Activated CD4-positive, alpha-beta memory T cell treated with anti-CD3 and anti-CD28 coated beads for 36 hours (primary cell): ENCODE measurements at regions of chr3 and their contacts with region 1.

Region 1: DNA sequence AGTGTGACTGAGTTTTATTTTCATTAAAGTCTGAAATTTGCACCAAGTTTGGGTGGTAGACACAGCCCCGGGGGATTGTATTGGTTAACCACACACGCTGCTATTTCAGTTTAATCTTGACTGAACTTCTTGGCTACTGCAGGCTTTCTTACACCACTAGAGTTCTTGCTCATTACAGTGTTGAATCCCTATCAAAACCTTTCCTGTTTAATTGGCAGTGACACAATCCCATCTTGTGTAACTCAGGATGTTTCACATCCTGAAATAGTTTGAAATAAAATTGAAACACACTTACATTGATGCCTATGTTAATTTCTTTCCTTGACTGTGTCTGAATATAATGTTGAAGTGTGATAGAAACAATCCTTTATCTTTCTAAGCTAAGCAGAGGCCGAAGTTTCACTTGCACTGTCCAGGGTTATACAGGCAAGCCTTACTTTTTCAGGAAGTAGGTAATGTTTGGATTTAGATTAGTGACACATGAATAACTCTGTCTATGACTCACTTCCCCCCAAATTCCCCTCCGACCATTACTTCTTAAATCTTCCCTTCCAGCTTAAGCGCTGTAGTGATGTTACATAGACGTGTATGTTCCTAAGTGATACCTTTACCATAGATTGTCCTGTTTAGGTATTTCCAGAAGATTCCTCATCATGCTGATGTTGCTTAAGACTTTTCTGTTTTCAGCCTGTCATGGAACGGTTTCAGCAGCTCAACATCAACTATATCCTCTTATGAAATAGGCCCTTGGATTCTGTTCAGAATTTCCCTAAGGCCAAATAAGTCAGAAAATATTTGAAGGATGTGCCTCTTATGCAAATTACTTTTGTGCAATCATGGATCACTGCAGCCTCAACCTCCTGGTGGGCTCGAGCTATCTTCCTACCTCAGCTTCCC is 16.8 kb downstream of the ATG7 start:
- DNase-seq: no peak
- H3K4me3 Mint-ChIP-seq: peak overlapping the region; percentile 18
- H3K27ac Mint-ChIP-seq: peak overlapping the region; percentile 84
- H3K4me1 Mint-ChIP-seq: peaks cover 47% of the 10 kb centered on the region
- H3K27me3 Mint-ChIP-seq: no peaks in the 10 kb centered on the region

Region 2: GRCh38 chr3:11271986-11272904 is 16.8 kb before region 1 on chr3 and contains the start of gene ATG7:
- CTCF ChIA-PET with region 1: interaction called, 5 read pairs
- POLR2A ChIA-PET with region 1: interaction called, 27 read pairs
- intact Hi-C with region 1: loop called (anchors 2 kb)
- DNase-seq: peak; percentile 97
- H3K4me3 Mint-ChIP-seq: peak within 1 kb of the TSS; percentile 85
- H3K27ac Mint-ChIP-seq: peak within 1 kb of the TSS; percentile 85
- H3K4me1 Mint-ChIP-seq: peaks cover 46% of the 10 kb centered on the region
- H3K27me3 Mint-ChIP-seq: no peaks in the 10 kb centered on the region
- total RNA-seq, gene ATG7: 30.5 to 33.6 TPM

Region 3: GRCh38 chr3:11306817-11307589 is 18.0 kb after region 1 on chr3:
- CTCF ChIA-PET with region 1: interaction called, 4 read pairs
- POLR2A ChIA-PET with region 1: interaction called, 4 read pairs
- intact Hi-C with region 1: loop called (anchors 2 kb)
- DNase-seq: peak; percentile 48
- H3K4me3 Mint-ChIP-seq: no peak overlapping the region
- H3K27ac Mint-ChIP-seq: no peak overlapping the region
- H3K4me1 Mint-ChIP-seq: peaks cover 23% of the 10 kb centered on the region
- H3K27me3 Mint-ChIP-seq: no peaks in the 10 kb centered on the region